Endothelial cell of umbilical vein (primary cell): ENCODE measurements at regions of chr9 and their contacts with region 1.

Region 1: DNA sequence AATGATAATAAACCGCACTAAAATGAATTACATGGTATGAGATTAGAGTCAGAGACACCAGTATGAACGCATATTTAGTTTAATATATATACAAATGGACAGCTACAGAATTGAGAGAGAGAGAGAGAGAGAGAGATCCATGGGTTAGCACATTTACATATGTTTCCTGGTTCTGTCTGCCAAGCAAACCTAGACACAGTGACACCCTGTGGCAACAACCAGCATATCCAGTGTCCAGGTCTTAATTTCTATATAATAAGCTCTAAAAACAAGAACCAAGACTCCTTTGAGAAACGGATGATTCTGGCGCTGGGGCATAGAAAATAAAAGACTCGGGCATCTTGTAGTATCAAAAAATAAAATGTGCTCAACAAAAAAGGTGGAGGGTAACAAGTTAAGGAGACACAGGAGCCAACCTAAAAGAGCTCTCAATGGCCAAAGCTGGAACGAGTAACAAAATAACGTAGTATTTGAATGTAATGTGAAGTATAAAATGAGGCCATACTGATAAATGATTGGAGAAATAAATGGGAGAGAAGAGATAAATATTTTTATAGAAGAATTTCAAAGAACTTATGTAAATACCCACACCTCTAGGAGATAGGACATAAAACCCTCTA is 84.5 kb downstream of the RFX3 start:
- DNase-seq: peak; percentile 80
- H3K4me3 ChIP-seq: no peak overlapping the region
- H3K27ac ChIP-seq: no peak overlapping the region
- H3K4me1 ChIP-seq: no peaks in the 10 kb centered on the region
- H3K27me3 ChIP-seq: no peaks in the 10 kb centered on the region
- CTCF ChIP-seq: peak; percentile 42 to 63
- POLR2A ChIP-seq: no peak

Region 2: DNA sequence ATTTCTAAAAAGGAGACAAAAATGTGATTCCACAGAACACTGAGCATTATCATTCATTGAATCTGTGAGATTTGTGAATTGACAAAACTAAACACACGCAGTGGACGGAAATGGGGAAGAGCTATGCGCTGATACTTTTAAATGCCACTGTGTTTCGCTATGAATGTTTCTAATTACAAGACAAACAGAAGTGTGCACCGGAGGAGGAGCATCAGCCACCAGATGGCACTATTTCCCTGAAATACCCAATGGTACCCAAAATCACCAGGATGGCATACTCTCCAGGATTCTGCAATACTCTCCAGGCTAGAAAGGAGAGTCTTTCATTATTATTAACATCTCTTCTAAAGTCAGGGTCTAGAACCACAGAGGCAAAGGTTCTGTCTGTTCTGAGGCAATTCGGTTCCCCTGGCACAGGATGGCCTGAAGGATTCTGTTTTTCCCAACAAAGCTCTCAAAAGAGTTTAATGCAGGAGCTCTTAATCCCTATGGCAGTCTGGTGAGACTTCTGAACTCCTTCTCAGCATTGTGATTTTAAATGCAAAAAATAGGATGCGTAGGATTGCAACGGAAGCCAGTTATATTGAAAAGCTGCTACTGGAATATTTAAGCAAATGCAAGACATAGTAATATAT is 583.6 kb before region 1 on chr9:
- CTCF ChIA-PET with region 1: interaction called, 41 read pairs
- POLR2A ChIA-PET with region 1: no interaction called
- dilution Hi-C with region 1: no loop called
- intact Hi-C with region 1: loop called (anchors 1 kb)
- DNase-seq: peak; percentile 67
- H3K4me3 ChIP-seq: no peak overlapping the region
- H3K27ac ChIP-seq: no peak overlapping the region
- H3K4me1 ChIP-seq: no peaks in the 10 kb centered on the region
- H3K27me3 ChIP-seq: peaks cover 5 to 14% of the 10 kb centered on the region in 2 experiments
- CTCF ChIP-seq: peak; percentile 75 to 76
- POLR2A ChIP-seq: no peak

Region 3: DNA sequence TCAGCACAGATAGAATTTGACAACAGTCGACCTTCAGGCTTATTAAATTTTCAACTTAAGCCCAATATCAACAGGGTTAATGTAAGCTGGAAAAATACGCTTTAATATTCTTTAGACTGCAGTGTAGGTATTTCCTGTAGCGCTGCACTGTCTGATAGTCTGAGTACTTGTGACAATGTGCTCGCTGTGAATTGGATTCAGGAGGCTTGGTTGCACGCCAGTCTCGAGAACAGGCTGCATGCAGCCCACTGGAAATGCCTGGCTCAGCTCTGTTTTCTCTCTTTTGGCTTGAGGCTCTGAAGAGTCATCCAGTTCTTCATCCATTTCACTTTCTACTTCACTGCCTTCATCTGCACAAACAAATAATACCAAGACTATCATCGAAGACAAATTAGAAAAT is 216.4 kb before region 1 on chr9:
- CTCF ChIA-PET with region 1: interaction called, 20 read pairs
- POLR2A ChIA-PET with region 1: no interaction called
- dilution Hi-C with region 1: no loop called
- intact Hi-C with region 1: no loop called
- DNase-seq: peak; percentile 37
- H3K4me3 ChIP-seq: no peak overlapping the region
- H3K27ac ChIP-seq: no peak overlapping the region
- H3K4me1 ChIP-seq: peaks cover 7% of the 10 kb centered on the region
- H3K27me3 ChIP-seq: no peaks in the 10 kb centered on the region
- CTCF ChIP-seq: no peak
- POLR2A ChIP-seq: no peak

Region 4: DNA sequence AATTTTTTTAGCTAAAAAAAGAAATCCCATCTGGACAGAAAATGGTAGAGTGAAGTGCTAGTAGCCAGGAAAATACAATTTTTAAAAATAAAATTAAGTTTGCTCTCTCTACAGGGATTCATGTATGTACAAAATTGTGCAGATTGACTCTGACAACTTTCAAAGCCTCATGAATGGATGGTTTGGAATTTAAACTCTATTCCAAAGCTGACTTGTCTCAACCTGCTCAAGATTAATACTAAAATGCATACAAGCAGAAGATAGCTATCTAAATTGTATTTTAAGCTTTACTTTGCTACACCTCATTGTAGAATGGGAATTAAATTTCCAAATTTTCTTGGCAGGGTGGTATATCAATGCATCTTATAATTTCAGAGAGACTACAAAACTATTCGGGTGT is 173.1 kb before region 1 on chr9:
- CTCF ChIA-PET with region 1: interaction called, 15 read pairs
- POLR2A ChIA-PET with region 1: no interaction called
- dilution Hi-C with region 1: no loop called
- intact Hi-C with region 1: no loop called
- DNase-seq: no peak
- H3K4me3 ChIP-seq: no peak overlapping the region
- H3K27ac ChIP-seq: no peak overlapping the region
- H3K4me1 ChIP-seq: no peaks in the 10 kb centered on the region
- H3K27me3 ChIP-seq: no peaks in the 10 kb centered on the region
- CTCF ChIP-seq: no peak
- POLR2A ChIP-seq: no peak

Region 5: DNA sequence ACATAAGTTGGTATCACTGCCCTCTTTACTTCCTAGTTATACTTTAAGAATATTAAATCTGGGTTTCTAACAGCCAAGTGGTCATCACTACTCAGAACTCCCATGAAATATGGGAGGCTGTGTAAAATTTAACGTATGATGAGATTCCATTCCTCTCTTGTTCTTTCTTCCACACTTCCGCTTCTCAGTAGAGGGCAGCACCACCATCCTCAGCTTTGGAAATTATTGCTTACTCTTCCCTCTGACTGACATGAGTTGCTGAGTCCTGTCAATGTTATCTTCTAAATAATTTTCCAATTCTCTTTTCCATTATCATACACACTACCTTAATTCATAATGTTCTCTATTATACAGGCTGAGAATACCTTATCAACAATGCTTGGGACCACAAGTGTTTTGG is 109.5 kb before region 1 on chr9:
- CTCF ChIA-PET with region 1: interaction called, 53 read pairs
- POLR2A ChIA-PET with region 1: interaction called, 3 read pairs
- dilution Hi-C with region 1: no loop called
- intact Hi-C with region 1: no loop called
- DNase-seq: no peak
- H3K4me3 ChIP-seq: no peak overlapping the region
- H3K27ac ChIP-seq: no peak overlapping the region
- H3K4me1 ChIP-seq: peaks cover 33% of the 10 kb centered on the region
- H3K27me3 ChIP-seq: no peaks in the 10 kb centered on the region
- CTCF ChIP-seq: no peak
- POLR2A ChIP-seq: no peak

Region 6: GRCh38 chr9:3419893-3420292 is 21.4 kb before region 1 on chr9:
- CTCF ChIA-PET with region 1: interaction called, 13 read pairs
- POLR2A ChIA-PET with region 1: no interaction called
- dilution Hi-C with region 1: no loop called
- intact Hi-C with region 1: no loop called
- DNase-seq: no peak
- H3K4me3 ChIP-seq: no peak overlapping the region
- H3K27ac ChIP-seq: no peak overlapping the region
- H3K4me1 ChIP-seq: no peaks in the 10 kb centered on the region
- H3K27me3 ChIP-seq: no peaks in the 10 kb centered on the region
- CTCF ChIP-seq: no peak
- POLR2A ChIP-seq: no peak

Region 7: DNA sequence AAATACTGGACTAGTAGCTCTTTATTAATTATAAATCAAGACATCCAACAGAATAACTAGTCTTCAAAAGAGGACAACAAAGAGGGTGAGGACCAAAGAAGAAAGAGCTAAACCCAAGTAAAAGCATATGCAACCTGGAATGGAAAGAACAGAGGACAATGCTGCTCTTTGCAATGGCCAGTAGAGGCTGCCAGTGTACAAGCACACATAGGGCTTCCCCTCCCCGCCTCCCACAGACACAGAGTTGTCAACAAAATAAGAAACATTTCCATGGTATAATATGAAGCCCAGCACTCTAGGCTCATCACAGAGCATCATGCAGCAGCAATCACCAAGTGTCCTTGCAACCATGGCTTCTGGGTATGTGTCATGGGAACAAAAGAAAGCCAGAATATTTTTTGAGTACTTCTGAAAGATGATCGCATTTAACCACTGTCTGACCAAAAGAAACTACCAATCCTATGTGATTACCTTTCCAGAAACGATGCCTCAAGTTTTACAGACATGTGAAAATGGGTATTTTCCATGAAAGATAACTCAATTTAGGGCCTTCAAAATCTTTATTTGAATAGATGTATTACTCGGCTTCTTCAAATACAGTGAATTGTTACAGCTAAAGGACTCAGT is 26.4 kb after region 1 on chr9:
- CTCF ChIA-PET with region 1: interaction called, 37 read pairs
- POLR2A ChIA-PET with region 1: no interaction called
- dilution Hi-C with region 1: no loop called
- intact Hi-C with region 1: no loop called
- DNase-seq: peak; percentile 66
- H3K4me3 ChIP-seq: no peak overlapping the region
- H3K27ac ChIP-seq: no peak overlapping the region
- H3K4me1 ChIP-seq: peaks cover 13% of the 10 kb centered on the region
- H3K27me3 ChIP-seq: no peaks in the 10 kb centered on the region
- CTCF ChIP-seq: peak; percentile 94
- POLR2A ChIP-seq: no peak

Region 8: GRCh38 chr9:3490957-3491356 is 49.6 kb after region 1 on chr9:
- CTCF ChIA-PET with region 1: no interaction called
- POLR2A ChIA-PET with region 1: no interaction called
- dilution Hi-C with region 1: no loop called
- intact Hi-C with region 1: no loop called
- DNase-seq: no peak
- H3K4me3 ChIP-seq: no peak overlapping the region
- H3K27ac ChIP-seq: no peak overlapping the region
- H3K4me1 ChIP-seq: no peaks in the 10 kb centered on the region
- H3K27me3 ChIP-seq: no peaks in the 10 kb centered on the region
- CTCF ChIP-seq: no peak
- POLR2A ChIP-seq: no peak

Region 9: DNA sequence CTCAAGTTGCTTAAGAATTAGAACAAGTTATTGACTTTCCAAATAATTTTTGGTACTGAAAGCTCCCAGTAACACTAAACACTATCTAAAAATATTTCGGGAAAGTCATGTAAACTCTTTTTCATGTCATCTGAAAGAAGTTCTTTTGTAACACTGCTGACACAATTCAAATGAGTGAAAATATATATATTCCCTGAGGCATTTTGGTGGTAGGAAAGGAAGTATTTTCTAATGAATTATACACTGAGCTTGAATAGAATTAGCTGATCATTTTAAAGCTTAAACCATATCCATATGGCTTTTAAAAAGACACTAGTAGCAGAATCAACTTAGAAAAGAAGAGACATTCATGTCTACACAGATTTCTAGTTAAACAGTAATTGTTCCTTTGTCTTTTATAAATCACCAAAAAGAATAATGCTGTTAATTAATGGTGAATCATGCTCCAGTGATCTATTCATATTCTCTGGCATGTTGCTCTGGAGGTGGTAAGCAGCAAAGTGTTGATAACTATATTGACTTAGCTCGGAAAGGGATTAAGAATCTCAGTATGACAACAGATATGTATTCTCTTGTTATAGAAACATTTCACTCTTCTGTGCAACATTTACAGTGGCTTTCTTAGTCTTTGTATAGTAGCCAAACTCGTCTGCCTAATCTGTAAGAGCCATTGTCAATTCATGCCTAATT is 111.9 kb after region 1 on chr9:
- CTCF ChIA-PET with region 1: no interaction called
- POLR2A ChIA-PET with region 1: no interaction called
- dilution Hi-C with region 1: no loop called
- intact Hi-C with region 1: no loop called
- DNase-seq: no peak
- H3K4me3 ChIP-seq: no peak overlapping the region
- H3K27ac ChIP-seq: no peak overlapping the region
- H3K4me1 ChIP-seq: no peaks in the 10 kb centered on the region
- H3K27me3 ChIP-seq: no peaks in the 10 kb centered on the region
- CTCF ChIP-seq: no peak
- POLR2A ChIP-seq: no peak

Region 10: DNA sequence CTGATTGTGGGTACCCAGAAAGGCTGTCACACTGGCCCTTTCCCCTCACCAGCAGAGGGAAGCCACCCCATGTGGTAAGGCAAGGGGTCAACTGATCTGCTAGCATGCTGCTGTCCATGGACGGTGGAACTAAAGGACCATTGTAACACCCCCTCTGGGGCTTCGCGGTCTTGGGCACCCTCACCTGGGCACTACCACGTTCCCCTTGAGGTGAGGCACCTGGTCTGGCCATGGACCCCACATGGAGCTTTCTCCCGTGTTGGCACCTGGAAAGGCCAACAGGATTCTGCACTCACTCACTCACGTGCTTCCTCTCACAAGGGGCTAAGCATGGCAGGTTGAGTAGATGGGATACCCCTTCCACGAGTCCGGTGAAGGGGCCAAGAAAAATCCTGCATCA is 156.5 kb after region 1 on chr9:
- CTCF ChIA-PET with region 1: no interaction called
- POLR2A ChIA-PET with region 1: no interaction called
- dilution Hi-C with region 1: no loop called
- intact Hi-C with region 1: no loop called
- DNase-seq: no peak
- H3K4me3 ChIP-seq: no peak overlapping the region
- H3K27ac ChIP-seq: no peak overlapping the region
- H3K4me1 ChIP-seq: no peaks in the 10 kb centered on the region
- H3K27me3 ChIP-seq: peaks cover 0 to 2% of the 10 kb centered on the region in 2 experiments
- CTCF ChIP-seq: no peak
- POLR2A ChIP-seq: no peak

Region 11: DNA sequence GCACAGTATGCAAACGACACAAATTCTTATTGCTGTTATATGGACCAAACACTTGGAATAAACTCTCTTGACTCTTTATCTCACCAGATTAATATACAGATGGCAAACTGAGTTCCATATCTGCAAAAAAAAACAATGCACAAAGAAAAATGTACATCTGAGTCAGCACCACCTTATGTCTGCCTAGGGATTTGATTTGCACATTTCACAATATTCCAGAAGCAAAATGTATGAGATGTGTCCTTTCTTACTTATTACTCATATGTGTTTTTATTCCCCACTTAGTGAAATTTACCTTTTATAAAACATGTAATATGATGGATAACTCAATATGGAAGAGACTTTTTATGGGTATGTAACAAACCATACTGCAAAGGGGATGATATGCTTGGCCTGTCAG is 621.7 kb after region 1 on chr9:
- CTCF ChIA-PET with region 1: no interaction called
- POLR2A ChIA-PET with region 1: no interaction called
- dilution Hi-C with region 1: no loop called
- intact Hi-C with region 1: no loop called
- DNase-seq: no peak
- H3K4me3 ChIP-seq: no peak overlapping the region
- H3K27ac ChIP-seq: no peak overlapping the region
- H3K4me1 ChIP-seq: no peaks in the 10 kb centered on the region
- H3K27me3 ChIP-seq: no peaks in the 10 kb centered on the region
- CTCF ChIP-seq: no peak
- POLR2A ChIP-seq: no peak